PC-9 (cell line): ENCODE measurements at regions of chr3 and their contacts with region 1.

Region 1: GRCh38 chr3:143443851-143444331 is 324.3 kb downstream of the CHST2 start:
- DNase-seq: peak; percentile 56 to 81
- H3K4me3 ChIP-seq: peak overlapping the region; percentile 6; the same call in 1 of the 2 replicates
- H3K27ac ChIP-seq: peak overlapping the region; percentile 80
- H3K4me1 ChIP-seq: peaks cover 29% of the 10 kb centered on the region
- H3K27me3 ChIP-seq: no peaks in the 10 kb centered on the region
- CTCF ChIP-seq: no peak

Region 2: GRCh38 chr3:143507735-143508580 is 64.1 kb after region 1 on chr3:
- CTCF ChIA-PET with region 1: no interaction called
- POLR2A ChIA-PET with region 1: interaction called, 12 read pairs
- intact Hi-C with region 1: no loop called
- DNase-seq: no peak
- H3K4me3 ChIP-seq: no peak overlapping the region
- H3K27ac ChIP-seq: no peak overlapping the region
- H3K4me1 ChIP-seq: no peaks in the 10 kb centered on the region
- H3K27me3 ChIP-seq: no peaks in the 10 kb centered on the region
- CTCF ChIP-seq: no peak